Gastrocnemius medialis (tissue), 4 donors: ENCODE measurements at regions of chr14 and their contacts with region 1.

Region 1: DNA sequence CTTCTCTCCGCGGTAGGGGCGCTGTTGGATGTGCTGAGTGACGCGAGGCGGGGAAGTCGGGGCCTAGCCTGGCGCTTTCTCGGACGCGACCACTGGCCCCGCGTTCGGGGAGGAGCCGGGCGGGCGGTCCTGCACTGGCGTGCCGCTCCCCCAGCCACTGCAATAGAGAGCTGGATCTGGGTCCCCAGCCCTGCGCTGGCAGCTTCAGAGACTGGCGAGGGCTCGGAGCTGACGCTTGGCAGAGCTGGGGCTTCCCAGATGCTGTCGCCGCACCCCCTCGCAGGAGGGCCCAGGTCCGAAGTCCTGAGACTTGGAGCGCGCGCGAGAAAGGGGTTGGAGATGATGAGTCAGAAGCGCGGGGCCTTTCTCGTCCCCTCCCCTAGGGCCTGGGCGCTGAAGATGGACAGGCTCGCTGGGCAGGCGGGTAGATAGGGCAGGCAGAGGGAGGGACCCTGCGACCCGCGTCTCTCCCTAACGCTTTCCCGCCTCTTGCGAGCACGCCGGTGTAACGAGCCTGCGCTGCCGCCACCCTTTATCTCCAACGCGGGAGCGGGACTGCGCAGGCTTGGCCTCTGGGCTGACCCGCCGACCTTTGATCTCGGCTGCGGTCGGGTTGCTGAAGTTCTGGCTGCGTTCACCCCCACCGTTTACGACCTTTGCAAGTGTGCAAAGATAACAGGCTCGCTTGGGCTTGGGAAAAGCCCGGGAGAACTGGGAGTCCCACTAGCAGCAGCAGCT is 3.0 kb downstream of the TMEM253 start:
- DNase-seq: peak; percentile 95
- ATAC-seq: peak; percentile 87 to 92
- H3K4me3 ChIP-seq: peak overlapping the region; percentile 74 to 86 (median 82)
- H3K27ac ChIP-seq: peak overlapping the region; percentile 97 to 99 (median 98)
- H3K4me1 ChIP-seq: peaks cover 40 to 41% of the 10 kb centered on the region in 2 donors
- H3K27me3 ChIP-seq: no peaks in the 10 kb centered on the region
- CTCF ChIP-seq: peak; percentile 77 to 87 (median 84)
- POLR2A ChIP-seq: peak; percentile 88 to 92

Region 2: DNA sequence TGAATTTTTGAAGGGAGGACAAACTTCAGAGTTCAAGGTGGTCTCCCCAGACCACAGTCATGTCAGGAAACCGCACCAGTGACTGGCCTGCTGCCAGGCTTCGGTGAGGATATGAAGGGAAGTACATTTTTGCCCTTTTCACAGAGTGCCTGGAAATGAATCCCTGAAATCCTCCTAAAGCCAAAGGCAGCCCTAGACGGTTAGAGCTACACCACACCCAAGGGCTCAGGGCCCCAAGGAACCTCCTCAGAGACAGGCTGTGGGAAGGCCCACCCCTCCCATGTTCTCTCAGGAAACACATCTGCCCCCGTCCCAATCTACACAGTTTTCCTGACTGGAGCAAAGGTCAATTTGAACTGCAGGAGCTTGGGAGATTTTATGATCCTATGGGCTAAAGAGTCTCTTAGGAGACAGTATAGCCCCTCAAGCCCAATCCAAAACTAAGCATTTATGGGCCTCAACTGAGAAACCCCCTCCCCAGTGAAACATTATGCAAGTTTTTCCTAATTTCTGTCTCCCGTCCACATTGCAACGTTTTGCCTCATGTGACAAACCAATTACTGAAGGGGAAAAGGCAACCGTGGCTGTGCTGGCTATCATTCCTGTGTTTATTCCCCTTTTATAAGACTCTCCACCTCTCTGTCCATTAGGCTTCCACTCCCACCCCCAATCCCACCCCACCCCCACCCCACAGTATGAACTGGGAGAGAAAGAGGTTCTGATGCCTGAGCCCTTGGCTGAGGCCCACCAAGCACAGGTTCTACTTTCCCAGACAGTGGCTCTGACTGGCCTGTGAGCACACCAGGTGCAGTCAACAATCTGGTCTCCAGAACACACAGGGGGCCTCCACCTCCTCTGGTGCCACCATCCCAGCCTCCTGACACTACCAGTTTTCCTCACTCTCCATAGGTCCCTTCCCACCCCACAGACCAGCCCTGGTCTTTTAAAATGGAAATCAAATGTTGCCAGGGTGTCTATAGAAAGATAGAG is 291.6 kb before region 1 on chr14:
- in situ Hi-C with region 1: no loop called
- intact Hi-C with region 1: no loop called
- DNase-seq: no peak
- ATAC-seq: no peak
- H3K4me3 ChIP-seq: no peak overlapping the region
- H3K27ac ChIP-seq: no peak overlapping the region
- H3K4me1 ChIP-seq: no peaks in the 10 kb centered on the region
- H3K27me3 ChIP-seq: no peaks in the 10 kb centered on the region
- CTCF ChIP-seq: no peak
- POLR2A ChIP-seq: no peak

Region 3: DNA sequence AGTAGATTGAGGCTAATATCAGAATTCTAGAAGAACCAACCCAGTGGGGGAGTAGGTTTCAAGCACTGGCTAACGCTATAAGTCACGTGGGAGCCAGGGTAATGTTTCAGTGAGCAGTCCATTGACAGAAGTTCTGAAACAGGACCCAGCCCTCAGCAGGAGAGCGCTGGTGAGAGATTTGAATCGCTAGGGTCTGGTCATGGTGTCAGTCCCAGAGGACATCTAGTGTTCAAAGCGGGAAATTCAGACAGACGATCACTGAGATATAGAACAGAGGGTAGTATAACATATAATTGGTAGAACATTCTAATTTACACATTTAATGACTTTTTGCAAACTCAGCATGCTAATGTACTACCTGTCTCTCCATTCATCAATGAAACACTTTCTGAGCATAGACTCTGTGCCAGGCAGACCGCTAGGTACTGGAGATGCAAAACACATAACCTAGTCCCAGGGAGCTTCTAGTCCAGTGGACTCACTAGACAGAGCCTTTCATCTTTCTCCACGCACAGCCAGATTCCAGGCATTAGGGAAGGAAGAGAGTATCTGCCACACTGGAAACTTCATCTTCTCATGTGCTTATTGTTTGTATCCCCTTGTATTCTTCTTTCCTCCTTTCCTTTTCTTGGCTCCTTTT is 248.1 kb before region 1 on chr14:
- in situ Hi-C with region 1: loop called (anchors 10 to 25 kb)
- intact Hi-C with region 1: loop called (anchors 5 kb)
- DNase-seq: peak in 1 of 2 donors; percentile 36
- ATAC-seq: peak; percentile 80 to 88
- H3K4me3 ChIP-seq: no peak overlapping the region
- H3K27ac ChIP-seq: no peak overlapping the region
- H3K4me1 ChIP-seq: peaks cover 0 to 4% of the 10 kb centered on the region in 2 donors
- H3K27me3 ChIP-seq: no peaks in the 10 kb centered on the region
- CTCF ChIP-seq: peak; percentile 28 to 67 (median 55)
- POLR2A ChIP-seq: no peak

Region 4: DNA sequence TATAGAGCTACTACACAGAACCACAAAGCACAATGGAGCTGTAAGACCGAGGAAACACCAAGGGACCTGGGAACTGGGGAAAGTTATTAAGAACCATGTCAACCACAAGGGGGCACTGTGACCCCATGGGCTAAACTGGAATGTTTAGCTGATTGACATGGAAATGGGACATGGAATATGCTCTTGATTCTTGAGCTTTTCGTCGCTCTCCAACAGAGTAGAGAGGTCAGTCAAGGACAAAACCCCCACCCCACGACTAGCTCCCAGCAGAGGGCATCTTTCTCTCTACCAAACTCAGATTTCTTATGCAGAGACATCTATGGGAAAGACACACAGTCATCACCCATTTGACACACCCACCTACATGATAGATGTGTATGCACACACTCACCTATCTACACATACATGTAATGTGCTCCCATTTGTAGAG is 89.1 kb before region 1 on chr14:
- in situ Hi-C with region 1: loop called (anchors 10 kb)
- intact Hi-C with region 1: loop called (anchors 1 kb)
- DNase-seq: peak; percentile 78 to 86
- ATAC-seq: peak; percentile 72 to 88
- H3K4me3 ChIP-seq: no peak overlapping the region
- H3K27ac ChIP-seq: peak overlapping the region; percentile 97 to 100 (median 100)
- H3K4me1 ChIP-seq: peaks cover 51 to 56% of the 10 kb centered on the region in 2 donors
- H3K27me3 ChIP-seq: no peaks in the 10 kb centered on the region
- CTCF ChIP-seq: peak; percentile 96 to 99 (median 98)
- POLR2A ChIP-seq: no peak

Region 5: DNA sequence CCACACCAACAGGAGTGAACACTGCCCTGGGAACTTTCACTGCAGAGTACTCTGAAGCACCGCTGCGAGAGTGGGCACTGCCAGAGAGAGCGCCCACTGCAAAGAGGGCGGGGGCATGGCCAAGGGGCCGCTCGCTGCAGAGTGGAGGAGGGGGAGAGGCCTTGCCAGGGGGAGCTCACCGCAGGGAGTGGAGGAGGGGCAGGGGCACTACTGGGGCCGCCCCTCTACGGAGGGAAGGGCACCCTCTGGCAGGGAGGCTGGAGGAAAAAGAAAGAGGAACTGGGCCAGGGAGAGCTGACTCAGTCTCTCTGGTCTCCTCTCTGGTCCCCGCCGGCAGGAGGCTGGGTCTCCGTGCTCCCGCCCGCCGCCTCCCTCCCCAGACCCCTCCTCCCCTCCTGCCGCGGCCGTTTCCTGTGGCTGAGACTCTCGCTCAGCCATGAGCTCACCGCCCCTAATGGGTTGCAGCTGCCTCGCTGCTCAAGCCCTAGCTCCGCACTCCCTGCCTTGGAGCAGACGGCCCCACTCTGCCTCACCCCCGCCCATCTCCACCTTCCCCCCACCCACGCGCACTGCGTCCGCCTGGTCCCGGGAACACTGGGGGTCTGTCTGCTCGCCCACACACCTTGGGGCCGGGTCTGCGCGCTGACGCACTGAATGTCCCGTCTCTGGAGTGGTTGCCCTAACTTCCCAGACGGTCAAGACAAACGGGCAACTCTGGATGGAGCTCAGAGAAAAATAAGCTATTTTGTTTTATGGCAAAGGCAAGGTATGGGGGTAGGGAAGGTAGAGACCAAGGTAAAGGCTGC is 32.5 kb before region 1 on chr14:
- in situ Hi-C with region 1: loop called in 2 of 4 experiments (anchors 5 kb)
- intact Hi-C with region 1: loop called (anchors 1 kb)
- DNase-seq: peak; percentile 55 to 65
- ATAC-seq: peak; percentile 21 to 37
- H3K4me3 ChIP-seq: peak overlapping the region; percentile 68 to 83 (median 74)
- H3K27ac ChIP-seq: peak overlapping the region; percentile 84 to 91 (median 88)
- H3K4me1 ChIP-seq: peaks cover 17 to 30% of the 10 kb centered on the region in 2 donors
- H3K27me3 ChIP-seq: no peaks in the 10 kb centered on the region
- CTCF ChIP-seq: no peak
- POLR2A ChIP-seq: peak in 1 of 2 donors; percentile 19

Region 6: GRCh38 chr14:21269252-21270046 is 165.6 kb after region 1 on chr14 and contains the start of gene HNRNPC:
- in situ Hi-C with region 1: no loop called
- intact Hi-C with region 1: loop called (anchors 2 kb)
- DNase-seq: peak; percentile 99 to 100
- ATAC-seq: peak; percentile 97 to 99
- H3K4me3 ChIP-seq: peak within 1 kb of the TSS; percentile 69 to 95 (median 81)
- H3K27ac ChIP-seq: peak within 1 kb of the TSS; percentile 92 to 99 (median 95)
- H3K4me1 ChIP-seq: peaks cover 34 to 38% of the 10 kb centered on the region in 2 donors
- H3K27me3 ChIP-seq: no peaks in the 10 kb centered on the region
- CTCF ChIP-seq: no peak
- POLR2A ChIP-seq: peak; percentile 95 to 96
- total RNA-seq, gene HNRNPC: 281 to 357 (median 318) TPM